ENCODE measurements at regions of chr12 and their contacts with region 1.

Region 1: DNA sequence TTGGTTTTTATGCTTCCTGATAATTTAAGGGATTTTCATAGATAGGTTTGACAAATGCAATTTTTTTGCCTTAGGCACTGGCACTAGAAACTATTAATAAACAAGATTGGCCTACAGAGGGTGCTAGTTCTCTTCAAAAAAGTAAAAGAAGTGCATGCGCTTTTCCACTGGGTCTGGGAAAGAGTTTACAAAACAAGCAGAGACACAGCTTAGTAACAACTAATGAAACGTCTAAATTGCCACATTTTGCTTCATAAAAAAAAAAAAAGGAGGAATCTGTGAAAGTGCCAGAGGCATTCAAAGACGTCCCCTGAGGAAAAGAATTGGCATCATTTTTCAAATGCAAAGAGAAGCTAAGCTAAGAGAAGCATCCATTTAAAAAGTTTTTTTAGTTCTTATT is 58.3 kb upstream of the EEA1 start:
- DNase-seq: no peak
- ATAC-seq: peak; percentile 86

Region 2: GRCh38 chr12:93397412-93397811 is 410.1 kb after region 1 on chr12:
- intact Hi-C with region 1: loop called in 1 of 2 experiments (anchors 5 kb)
- DNase-seq: no peak
- ATAC-seq: no peak